ENCODE measurements at regions of chrX and their contacts with region 1.

Region 1: GRCh38 chrX:131356725-131357124 is 67.6 kb upstream of the IGSF1 start:
- DNase-seq: no peak
- H3K4me3 ChIP-seq: no peak overlapping the region
- H3K27ac ChIP-seq: no peak overlapping the region
- H3K4me1 ChIP-seq: no peaks in the 10 kb centered on the region
- H3K27me3 ChIP-seq: peaks cover 38% of the 10 kb centered on the region
- CTCF ChIP-seq: no peak

Region 2: DNA sequence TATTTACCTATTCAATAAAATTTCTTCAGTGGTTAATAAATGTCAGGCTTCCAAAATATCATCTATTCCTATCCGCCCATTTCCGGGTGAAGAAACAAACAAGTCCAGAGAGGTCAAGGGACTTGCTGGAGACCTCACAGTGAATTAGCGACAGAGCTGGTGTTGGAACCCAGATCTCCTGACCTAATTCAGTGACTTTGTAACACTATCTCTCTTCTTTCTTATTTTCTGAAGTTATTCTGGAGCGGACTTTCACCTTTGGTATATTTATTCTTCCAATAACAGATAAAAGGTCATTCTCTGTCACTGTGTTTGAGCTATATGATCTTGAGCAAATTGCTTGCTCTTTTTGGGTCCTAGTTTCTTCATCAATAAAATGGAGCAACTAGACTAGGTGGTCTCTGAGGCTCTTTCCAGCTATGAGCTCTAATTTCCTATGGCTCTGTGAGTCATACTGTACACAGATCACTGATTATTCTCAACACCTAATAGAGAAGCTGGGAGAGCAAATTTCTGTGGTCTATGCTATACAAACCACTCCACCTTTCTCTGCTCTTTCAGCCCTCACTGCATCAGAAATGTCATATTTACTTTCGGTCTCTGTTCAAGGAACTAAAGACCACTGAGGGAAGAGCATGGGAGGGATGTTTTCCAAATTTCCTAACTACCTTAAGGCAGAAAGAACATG is 45.5 kb after region 1 on chrX:
- CTCF ChIA-PET with region 1: no interaction called
- POLR2A ChIA-PET with region 1: no interaction called
- intact Hi-C with region 1: loop called (anchors 2 kb)
- DNase-seq: no peak
- H3K4me3 ChIP-seq: no peak overlapping the region
- H3K27ac ChIP-seq: no peak overlapping the region
- H3K4me1 ChIP-seq: no peaks in the 10 kb centered on the region
- H3K27me3 ChIP-seq: peaks cover 26% of the 10 kb centered on the region
- CTCF ChIP-seq: no peak

Region 3: GRCh38 chrX:131443796-131444195 is 87.1 kb after region 1 on chrX:
- CTCF ChIA-PET with region 1: no interaction called
- POLR2A ChIA-PET with region 1: no interaction called
- intact Hi-C with region 1: no loop called
- DNase-seq: no peak
- H3K4me3 ChIP-seq: no peak overlapping the region
- H3K27ac ChIP-seq: no peak overlapping the region
- H3K4me1 ChIP-seq: no peaks in the 10 kb centered on the region
- H3K27me3 ChIP-seq: peaks cover 13% of the 10 kb centered on the region
- CTCF ChIP-seq: no peak

Measured in A673 (cell line).